ENCODE measurements at regions of chr12 and their contacts with region 1.

Region 1: DNA sequence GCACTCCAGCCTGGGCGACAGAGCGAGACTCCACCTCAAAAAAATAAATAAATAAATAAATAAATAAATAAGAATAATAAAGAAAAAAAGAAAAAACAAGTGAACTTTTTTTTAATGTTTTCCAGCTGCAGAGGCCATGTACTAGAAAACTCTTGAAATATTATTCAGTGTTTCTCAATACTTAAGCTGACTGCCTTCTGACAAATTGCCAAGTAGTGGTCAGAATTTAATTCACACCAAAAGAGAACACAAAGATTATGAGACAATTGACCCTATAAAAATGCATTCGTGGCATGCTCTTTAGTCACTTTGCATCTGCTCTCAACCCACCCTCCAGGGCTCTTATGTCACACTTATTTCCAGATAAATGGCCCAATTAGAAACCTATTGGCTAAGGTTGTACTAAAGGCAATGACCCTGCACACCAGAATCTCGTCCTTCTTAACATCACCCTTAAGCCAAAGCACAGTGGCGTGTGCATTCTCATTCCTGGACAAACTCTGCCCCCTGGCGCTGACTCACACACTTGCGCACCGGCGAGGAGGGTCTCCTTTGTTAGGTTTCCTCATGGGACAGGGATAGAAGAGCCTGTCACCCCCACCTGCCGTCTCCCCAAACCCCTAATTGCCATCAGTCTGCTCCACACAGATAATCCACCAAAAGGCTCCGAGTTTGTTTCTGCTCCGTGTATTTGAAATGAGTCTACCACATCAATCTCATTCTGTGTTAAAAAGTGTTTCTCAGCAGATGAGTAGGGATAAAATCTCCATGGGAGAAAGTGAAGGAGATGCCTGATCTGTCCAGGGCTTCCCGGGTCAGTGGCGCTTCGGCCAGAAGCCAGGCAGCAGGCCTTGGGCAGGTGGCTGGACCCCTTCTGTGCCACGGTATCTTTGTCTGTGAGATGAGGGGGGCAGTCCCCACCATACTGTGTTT is 73.1 kb upstream of the CEP83 start:
- DNase-seq: peak; percentile 30
- ATAC-seq: peak; percentile 95
- H3K4me3 ChIP-seq: no peak overlapping the region
- H3K27ac ChIP-seq: no peak overlapping the region
- H3K4me1 ChIP-seq: no peaks in the 10 kb centered on the region
- H3K27me3 ChIP-seq: no peaks in the 10 kb centered on the region
- CTCF ChIP-seq: peak; percentile 86

Region 2: GRCh38 chr12:94133964-94134795 is 398.6 kb before region 1 on chr12:
- CTCF ChIA-PET with region 1: no interaction called
- POLR2A ChIA-PET with region 1: no interaction called
- in situ Hi-C with region 1: no loop called
- intact Hi-C with region 1: loop called (anchors 5 kb)
- DNase-seq: peak; percentile 20
- ATAC-seq: peak; percentile 63
- H3K4me3 ChIP-seq: no peak overlapping the region
- H3K27ac ChIP-seq: no peak overlapping the region
- H3K4me1 ChIP-seq: no peaks in the 10 kb centered on the region
- H3K27me3 ChIP-seq: peaks cover 6% of the 10 kb centered on the region; the same call in 1 of the 2 replicates
- CTCF ChIP-seq: peak; percentile 74

Region 3: DNA sequence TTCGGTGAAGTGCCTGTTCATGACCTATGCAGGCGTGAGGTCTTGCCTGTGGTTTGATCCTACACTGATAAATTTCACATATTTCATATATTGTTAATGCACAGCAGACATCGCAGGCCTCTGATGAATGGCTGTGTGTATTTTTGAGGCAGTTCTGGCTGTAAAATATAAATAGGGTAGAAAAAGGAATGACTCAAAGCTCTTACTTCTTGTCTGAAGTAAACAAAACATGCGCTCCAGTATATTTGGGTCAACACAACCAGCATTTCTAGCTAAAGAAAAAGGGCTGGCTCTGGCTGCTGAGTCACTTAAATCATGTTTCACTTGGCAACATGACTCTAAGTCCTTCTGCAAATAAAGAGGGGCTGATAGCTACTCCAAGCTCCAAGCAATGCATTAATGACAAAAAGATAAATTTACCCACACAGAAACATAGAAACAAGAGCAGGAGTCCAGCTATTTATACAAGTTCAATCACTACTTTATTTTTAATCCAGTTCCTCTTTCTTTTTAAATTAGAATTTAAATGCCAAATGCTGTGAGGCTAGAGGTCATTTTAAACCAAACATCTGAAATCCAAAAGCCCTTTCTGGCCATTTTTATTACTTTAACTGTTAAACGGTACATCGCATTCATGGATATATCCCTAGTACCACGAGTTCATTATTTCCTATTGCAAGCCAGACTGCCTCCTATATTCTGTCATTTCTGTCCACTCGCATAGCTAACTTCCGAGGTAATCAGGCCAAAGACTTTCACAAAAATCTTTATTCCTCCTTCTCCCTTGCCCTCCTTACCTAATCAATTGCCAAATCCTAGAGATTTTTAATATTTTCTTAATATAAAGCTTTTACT is 171.9 kb after region 1 on chr12:
- CTCF ChIA-PET with region 1: no interaction called
- POLR2A ChIA-PET with region 1: no interaction called
- in situ Hi-C with region 1: no loop called
- intact Hi-C with region 1: no loop called
- DNase-seq: no peak
- ATAC-seq: peak; percentile 56; the same call in 1 of the 2 replicates
- H3K4me3 ChIP-seq: no peak overlapping the region
- H3K27ac ChIP-seq: no peak overlapping the region
- H3K4me1 ChIP-seq: no peaks in the 10 kb centered on the region
- H3K27me3 ChIP-seq: no peaks in the 10 kb centered on the region; the same call in 1 of the 2 replicates
- CTCF ChIP-seq: no peak